MCF 10A (cell line): ENCODE measurements at regions of chr4 and their contacts with region 1.

Region 1: GRCh38 chr4:67988991-67989390 is 25.7 kb upstream of the TMPRSS11A start:
- DNase-seq: no peak
- H3K4me3 Mint-ChIP-seq: no peak overlapping the region
- H3K27ac Mint-ChIP-seq: no peak overlapping the region
- H3K4me1 Mint-ChIP-seq: no peaks in the 10 kb centered on the region
- H3K27me3 Mint-ChIP-seq: no peaks in the 10 kb centered on the region
- CTCF ChIP-seq: no peak

Region 2: DNA sequence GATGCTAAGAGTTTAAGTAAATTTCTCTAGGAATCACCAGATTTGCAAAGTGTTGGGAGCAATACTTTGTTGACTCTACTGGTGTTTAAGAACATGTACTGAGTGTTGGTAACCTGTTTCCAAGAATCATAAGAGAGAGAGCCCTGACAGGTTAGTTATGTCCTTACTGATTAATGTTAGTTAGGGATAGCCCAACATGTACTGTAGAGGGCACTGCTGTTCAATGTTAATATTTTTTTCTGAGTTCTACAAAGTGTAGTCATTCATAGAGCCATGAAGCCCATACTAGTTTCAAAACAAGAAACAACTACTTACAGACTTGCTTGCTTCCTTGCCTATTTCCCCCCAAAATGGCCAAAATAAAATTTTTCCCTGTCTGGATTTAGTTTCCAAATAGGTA is 117.1 kb before region 1 on chr4:
- CTCF ChIA-PET with region 1: interaction called, 3 read pairs
- POLR2A ChIA-PET with region 1: no interaction called
- intact Hi-C with region 1: loop called (anchors 2 kb)
- DNase-seq: peak; percentile 55
- H3K4me3 Mint-ChIP-seq: no peak overlapping the region
- H3K27ac Mint-ChIP-seq: no peak overlapping the region
- H3K4me1 Mint-ChIP-seq: peaks cover 4% of the 10 kb centered on the region
- H3K27me3 Mint-ChIP-seq: no peaks in the 10 kb centered on the region
- CTCF ChIP-seq: peak; percentile 55

Region 3: GRCh38 chr4:67918428-67918827 is 70.6 kb before region 1 on chr4:
- CTCF ChIA-PET with region 1: interaction called, 5 read pairs
- POLR2A ChIA-PET with region 1: no interaction called
- intact Hi-C with region 1: loop called (anchors 2 kb)
- DNase-seq: peak; percentile 28
- H3K4me3 Mint-ChIP-seq: no peak overlapping the region
- H3K27ac Mint-ChIP-seq: no peak overlapping the region
- H3K4me1 Mint-ChIP-seq: peaks cover 5% of the 10 kb centered on the region
- H3K27me3 Mint-ChIP-seq: no peaks in the 10 kb centered on the region
- CTCF ChIP-seq: peak; percentile 61

Region 4: GRCh38 chr4:68180849-68181526 is 192.0 kb after region 1 on chr4:
- CTCF ChIA-PET with region 1: interaction called, 86 read pairs
- POLR2A ChIA-PET with region 1: no interaction called
- intact Hi-C with region 1: no loop called
- DNase-seq: peak; percentile 67
- H3K4me3 Mint-ChIP-seq: no peak overlapping the region
- H3K27ac Mint-ChIP-seq: peak overlapping the region; percentile 92
- H3K4me1 Mint-ChIP-seq: peaks cover 6% of the 10 kb centered on the region
- H3K27me3 Mint-ChIP-seq: no peaks in the 10 kb centered on the region
- CTCF ChIP-seq: no peak